ENCODE measurements at regions of chr6 and their contacts with region 1.

Region 1: DNA sequence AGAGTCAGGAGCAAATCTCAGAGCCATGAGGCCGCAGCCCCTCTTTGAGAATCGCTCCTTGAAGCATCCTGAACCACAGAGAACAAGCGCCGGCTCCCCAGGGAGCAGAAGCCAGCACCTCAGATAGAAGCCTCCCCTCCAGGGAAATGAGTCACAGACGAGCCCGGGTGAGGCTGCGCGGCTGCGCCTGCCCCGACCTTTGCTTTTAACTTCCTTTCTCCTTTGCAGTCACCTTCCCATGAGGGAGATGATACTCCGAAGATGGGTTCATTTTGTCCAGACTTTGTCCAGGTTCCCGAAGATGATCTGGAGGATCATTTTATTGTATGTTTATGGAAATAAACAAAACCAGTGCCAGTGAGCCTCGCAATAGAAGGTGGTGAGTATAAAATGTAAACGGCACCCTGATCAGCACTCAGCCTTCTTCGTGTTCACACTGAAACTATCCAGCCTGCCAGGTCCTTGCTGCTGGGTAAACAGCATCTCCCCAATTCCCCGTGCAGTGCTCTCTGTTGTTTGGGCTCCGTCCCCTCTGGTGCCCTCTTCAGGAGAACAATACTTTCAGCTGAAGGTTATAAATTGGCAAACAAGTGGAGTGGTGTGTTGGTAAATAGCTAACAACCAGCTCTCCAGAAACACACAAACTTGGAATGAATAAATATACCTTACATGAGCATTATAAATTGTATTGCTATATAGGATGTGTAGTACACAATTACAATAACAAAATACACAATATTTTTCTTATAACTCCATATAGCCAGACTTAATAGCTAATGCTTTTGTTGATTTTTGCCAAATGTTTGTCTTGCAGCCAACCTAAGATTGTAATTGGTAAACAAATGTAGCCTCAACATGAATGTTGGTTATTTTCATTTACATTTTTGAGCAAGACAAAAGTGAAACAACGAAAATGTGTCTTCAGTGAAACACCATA is 41.4 kb upstream of the TMEM181 start:
- DNase-seq: peak; percentile 89
- H3K4me3 Mint-ChIP-seq: peak overlapping the region; percentile 73
- H3K27ac Mint-ChIP-seq: peak overlapping the region; percentile 82
- H3K4me1 Mint-ChIP-seq: no peaks in the 10 kb centered on the region
- H3K27me3 Mint-ChIP-seq: no peaks in the 10 kb centered on the region
- CTCF ChIP-seq: peak; percentile 60

Region 2: DNA sequence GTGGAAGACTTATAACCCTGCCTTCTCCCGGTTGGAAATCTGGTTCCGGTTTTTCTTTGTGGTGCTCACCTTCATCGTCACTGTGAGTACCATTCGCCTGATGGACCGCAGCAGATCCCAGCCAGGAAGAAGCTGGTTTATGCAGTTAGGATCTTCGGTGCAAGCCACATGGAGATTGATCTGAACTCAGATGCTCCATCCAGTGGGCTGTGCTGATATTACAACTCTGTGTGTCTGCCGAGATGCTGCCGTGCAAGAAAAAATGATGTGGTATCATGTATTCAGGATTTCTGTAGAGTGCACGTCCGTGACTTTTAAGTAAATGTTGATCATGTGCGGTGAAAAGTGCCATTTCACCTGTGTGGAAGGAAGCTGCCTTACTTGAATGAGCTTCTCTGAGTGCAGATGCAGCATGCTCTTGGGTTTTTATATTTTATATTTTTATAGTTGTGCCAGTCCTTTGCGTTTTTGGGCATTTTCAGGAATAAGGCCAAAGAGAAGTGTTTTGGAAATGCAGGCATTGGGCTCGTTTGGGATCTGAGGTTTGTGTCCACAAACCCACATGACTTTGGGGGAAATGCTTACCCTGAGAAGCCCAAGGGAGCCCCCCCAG is 86.9 kb after region 1 on chr6:
- CTCF ChIA-PET with region 1: no interaction called
- POLR2A ChIA-PET with region 1: interaction called, 3 read pairs
- intact Hi-C with region 1: loop called (anchors 10 kb)
- DNase-seq: peak; percentile 65
- H3K4me3 Mint-ChIP-seq: no peak overlapping the region
- H3K27ac Mint-ChIP-seq: no peak overlapping the region
- H3K4me1 Mint-ChIP-seq: no peaks in the 10 kb centered on the region
- H3K27me3 Mint-ChIP-seq: no peaks in the 10 kb centered on the region
- CTCF ChIP-seq: peak; percentile 72

Region 3: GRCh38 chr6:158926416-158926815 is 408.0 kb after region 1 on chr6:
- CTCF ChIA-PET with region 1: no interaction called
- POLR2A ChIA-PET with region 1: no interaction called
- intact Hi-C with region 1: no loop called
- DNase-seq: peak; percentile 72
- H3K4me3 Mint-ChIP-seq: no peak overlapping the region
- H3K27ac Mint-ChIP-seq: peak overlapping the region; percentile 91
- H3K4me1 Mint-ChIP-seq: peaks cover 6% of the 10 kb centered on the region
- H3K27me3 Mint-ChIP-seq: no peaks in the 10 kb centered on the region
- CTCF ChIP-seq: no peak